ENCODE measurements at regions of chr1 and their contacts with region 1.

Region 1: GRCh38 chr1:158117854-158118704 is 62.6 kb upstream of the CD1D start:
- DNase-seq: no peak
- H3K4me3 ChIP-seq: peak overlapping the region; percentile 36
- H3K27ac ChIP-seq: no peak overlapping the region
- H3K27me3 ChIP-seq: peaks cover 20% of the 10 kb centered on the region
- CTCF ChIP-seq: peak; percentile 80

Region 2: DNA sequence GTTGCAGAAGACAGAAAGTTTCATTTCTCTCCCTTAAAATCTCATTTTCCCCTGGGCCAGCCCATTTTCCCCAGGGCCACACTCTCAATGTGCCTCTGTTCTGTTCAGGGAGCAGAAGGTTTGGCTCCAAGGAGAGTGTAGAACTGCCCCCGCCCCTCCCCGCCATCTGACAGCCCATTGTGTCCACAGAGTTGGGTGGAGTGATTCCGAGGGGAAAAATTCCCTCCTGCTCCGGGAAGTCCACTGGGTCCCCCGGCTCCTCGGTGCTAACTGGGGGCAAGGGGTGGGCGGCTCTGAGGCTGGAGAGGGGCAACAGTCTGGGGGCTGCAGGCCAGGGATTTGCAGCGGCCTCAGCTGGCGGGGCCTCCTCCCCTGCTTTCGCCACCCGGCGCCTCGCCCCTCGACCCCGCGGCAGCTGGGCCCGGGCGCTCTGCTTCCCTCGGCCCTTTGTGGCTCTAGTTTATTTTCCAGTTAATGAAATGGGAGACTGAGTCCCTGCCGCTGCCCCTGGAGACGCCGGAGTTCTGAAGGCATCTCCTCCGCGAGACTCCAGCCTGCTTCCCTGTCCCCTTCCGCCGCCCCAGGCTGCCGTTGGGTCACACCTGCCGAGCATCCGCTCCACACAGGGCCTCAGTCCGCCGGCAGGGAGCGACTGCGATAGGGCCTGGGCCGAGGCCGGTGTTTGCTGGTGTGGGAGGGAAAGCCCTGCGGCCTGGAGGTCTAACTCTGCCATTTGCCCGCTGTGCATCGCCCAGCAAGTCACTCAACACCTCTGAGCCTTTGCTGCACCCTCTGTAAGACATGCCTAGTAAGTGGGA is 139.3 kb before region 1 on chr1:
- CTCF ChIA-PET with region 1: interaction called, 1,031 read pairs
- POLR2A ChIA-PET with region 1: no interaction called
- DNase-seq: no peak
- H3K4me3 ChIP-seq: no peak overlapping the region
- H3K27ac ChIP-seq: no peak overlapping the region
- H3K27me3 ChIP-seq: peaks cover 27% of the 10 kb centered on the region
- CTCF ChIP-seq: no peak

Region 3: DNA sequence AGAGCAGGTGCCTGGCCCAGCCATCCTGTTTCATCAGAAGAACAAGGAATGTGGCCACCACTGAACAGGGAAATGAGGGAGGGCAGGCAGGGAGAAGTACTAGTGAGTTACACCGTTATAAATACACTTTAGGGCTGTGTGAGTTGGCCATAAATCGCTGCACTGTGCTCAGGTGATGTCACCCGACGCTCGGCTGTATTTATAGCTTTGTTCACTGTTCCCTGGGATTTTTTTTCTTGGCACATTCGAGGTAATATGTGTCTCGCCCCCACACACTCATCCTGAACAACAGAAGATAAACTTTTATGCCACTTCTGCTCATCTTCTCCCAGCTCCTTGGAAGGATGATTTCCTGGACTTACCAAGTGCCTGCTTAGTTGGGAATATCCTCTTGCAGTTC is 133.6 kb before region 1 on chr1:
- CTCF ChIA-PET with region 1: interaction called, 590 read pairs
- POLR2A ChIA-PET with region 1: interaction called, 3 read pairs
- DNase-seq: no peak
- H3K4me3 ChIP-seq: no peak overlapping the region
- H3K27ac ChIP-seq: no peak overlapping the region
- H3K27me3 ChIP-seq: peaks cover 58% of the 10 kb centered on the region
- CTCF ChIP-seq: no peak

Region 4: DNA sequence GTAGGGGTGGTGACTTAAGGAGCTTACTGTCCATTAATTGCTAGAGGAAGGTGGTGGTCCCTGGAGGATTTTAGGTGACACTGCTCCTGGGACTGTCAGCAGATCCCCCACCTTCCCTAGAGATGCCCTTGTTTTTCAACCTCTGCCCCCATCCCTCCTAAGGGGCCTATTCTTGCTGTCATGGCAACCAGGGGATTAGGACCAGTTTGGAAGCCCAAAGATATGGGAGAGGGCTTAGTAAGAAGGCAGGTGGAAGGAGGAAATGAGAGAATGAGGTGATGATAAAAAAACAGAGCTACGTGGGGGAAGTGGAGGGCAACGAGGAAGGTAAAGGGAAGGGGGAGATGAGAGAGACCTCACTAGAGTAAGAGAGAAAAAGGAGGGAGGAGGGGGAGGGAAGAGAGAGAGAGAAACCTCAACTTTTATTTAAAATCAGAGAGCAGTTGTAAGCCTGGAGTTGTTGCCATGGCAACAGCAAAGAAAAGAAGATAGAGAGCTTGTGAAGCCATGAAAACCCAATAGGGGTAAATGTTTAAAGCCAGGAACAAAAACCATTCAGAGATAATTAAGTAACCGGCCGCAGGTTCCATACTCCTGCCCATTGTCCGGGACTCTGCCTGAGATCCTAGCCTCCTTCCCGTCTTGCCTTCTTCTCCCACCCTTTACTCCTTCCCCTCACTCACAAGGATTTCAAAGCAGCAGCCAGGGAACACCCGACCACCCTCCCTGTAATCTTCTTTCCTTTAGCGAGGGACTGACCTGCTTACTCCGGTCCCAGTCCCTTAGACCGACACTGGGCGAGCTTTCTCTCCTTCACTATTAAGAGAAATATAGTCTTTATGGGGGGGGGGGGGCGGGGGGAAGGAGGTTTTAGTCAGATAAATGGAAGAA is 104.0 kb before region 1 on chr1:
- CTCF ChIA-PET with region 1: interaction called, 11 read pairs
- POLR2A ChIA-PET with region 1: no interaction called
- DNase-seq: no peak
- H3K4me3 ChIP-seq: no peak overlapping the region
- H3K27ac ChIP-seq: peak overlapping the region; percentile 52
- H3K27me3 ChIP-seq: no peaks in the 10 kb centered on the region
- CTCF ChIP-seq: no peak

Region 5: GRCh38 chr1:158045639-158046038 is 72.4 kb before region 1 on chr1:
- CTCF ChIA-PET with region 1: interaction called, 11 read pairs
- POLR2A ChIA-PET with region 1: no interaction called
- DNase-seq: peak; percentile 42
- H3K4me3 ChIP-seq: no peak overlapping the region
- H3K27ac ChIP-seq: no peak overlapping the region
- H3K27me3 ChIP-seq: no peaks in the 10 kb centered on the region
- CTCF ChIP-seq: no peak

Region 6: GRCh38 chr1:158101927-158102326 is 16.2 kb before region 1 on chr1:
- CTCF ChIA-PET with region 1: interaction called, 281 read pairs
- POLR2A ChIA-PET with region 1: no interaction called
- DNase-seq: no peak
- H3K4me3 ChIP-seq: no peak overlapping the region
- H3K27ac ChIP-seq: no peak overlapping the region
- H3K27me3 ChIP-seq: peaks cover 3% of the 10 kb centered on the region
- CTCF ChIP-seq: no peak

Region 7: DNA sequence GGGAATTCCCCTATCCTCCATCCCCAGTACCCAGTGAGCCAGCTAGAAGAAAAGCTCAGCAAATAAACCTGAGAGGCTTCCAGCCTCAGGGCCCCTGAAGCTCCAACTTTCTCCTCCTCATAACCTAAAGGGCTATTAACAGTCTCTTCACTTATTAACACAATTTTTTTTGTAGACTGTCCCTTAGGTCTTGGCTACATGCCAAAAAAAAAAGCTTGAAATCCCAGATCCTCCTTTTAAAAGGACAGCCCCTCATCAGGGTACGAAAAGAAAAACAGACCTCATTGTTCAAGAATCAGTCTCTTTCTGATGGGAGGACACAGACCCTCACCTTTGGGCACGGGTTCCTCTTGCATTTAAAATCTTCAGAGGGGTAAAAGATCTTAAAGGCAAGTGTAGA is 10.2 kb before region 1 on chr1:
- CTCF ChIA-PET with region 1: interaction called, 37 read pairs
- POLR2A ChIA-PET with region 1: no interaction called
- DNase-seq: no peak
- H3K4me3 ChIP-seq: no peak overlapping the region
- H3K27ac ChIP-seq: no peak overlapping the region
- H3K27me3 ChIP-seq: peaks cover 12% of the 10 kb centered on the region
- CTCF ChIP-seq: no peak

Region 8: DNA sequence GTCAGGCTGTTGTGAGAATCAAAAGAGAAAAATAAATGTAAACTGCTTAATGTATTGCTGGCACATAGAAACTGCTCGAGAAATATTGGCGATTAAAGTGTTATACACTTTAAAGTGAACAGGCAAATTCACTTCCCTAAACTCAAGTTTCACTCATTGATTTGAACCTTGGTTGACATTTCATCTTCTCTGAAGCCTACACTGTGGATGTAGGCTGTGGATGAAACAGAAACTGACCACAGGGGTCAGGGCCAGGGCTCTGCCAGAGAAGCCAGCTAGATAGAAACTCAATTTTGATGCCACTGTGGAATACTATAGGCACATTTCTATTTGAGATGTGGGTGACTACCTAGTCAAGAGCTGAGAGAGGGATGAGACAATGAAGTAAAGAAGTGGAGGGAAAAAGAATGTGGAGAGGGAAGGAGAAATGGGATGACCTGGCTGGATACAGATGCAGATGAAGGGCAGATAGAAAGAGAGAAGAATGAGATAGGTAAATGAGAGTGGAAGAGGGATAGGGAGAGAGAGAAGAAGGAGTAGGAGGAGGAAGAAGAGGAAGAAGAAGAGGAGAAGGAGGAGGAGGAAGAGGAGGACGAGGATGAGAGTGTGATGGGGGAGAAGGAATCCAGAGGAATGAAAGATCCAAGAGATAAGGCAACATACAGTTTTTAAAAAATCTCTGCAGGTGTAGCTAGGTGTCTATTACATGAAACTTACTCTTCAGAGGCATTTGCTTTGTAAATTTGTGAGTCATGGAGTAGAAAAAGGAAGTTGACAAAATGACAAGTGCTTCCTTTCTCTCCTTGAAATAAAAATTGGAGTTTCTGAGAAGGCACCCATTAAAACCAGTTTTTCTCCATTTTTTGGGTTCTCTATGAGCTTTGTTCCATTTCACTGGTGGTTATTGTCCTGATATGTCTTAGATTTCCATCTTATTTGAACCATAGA is 45.2 kb after region 1 on chr1:
- CTCF ChIA-PET with region 1: no interaction called
- POLR2A ChIA-PET with region 1: no interaction called
- DNase-seq: no peak
- H3K4me3 ChIP-seq: no peak overlapping the region
- H3K27ac ChIP-seq: no peak overlapping the region
- H3K27me3 ChIP-seq: no peaks in the 10 kb centered on the region
- CTCF ChIP-seq: no peak

Region 9: GRCh38 chr1:158422212-158422611 is 304.1 kb after region 1 on chr1:
- CTCF ChIA-PET with region 1: no interaction called
- POLR2A ChIA-PET with region 1: no interaction called
- DNase-seq: no peak
- H3K4me3 ChIP-seq: no peak overlapping the region
- H3K27ac ChIP-seq: no peak overlapping the region
- H3K27me3 ChIP-seq: no peaks in the 10 kb centered on the region
- CTCF ChIP-seq: no peak

Measured in AG04450 (cell line).